K562 (cell line): ENCODE measurements at regions of chr1 and their contacts with region 1.

Region 1: GRCh38 chr1:28581536-28582247 is 10.4 kb upstream of the RAB42 start:
- DNase-seq: peak; percentile 93 to 99 (median 96)
- ATAC-seq: peak; percentile 92
- H3K4me3 ChIP-seq: peak overlapping the region; percentile 81
- H3K27ac ChIP-seq: peak overlapping the region; percentile 81
- H3K4me1 ChIP-seq: peaks cover 18 to 24% of the 10 kb centered on the region in 2 experiments; a peak in 4 of 5 replicates
- H3K27me3 ChIP-seq: no peaks in the 10 kb centered on the region
- CTCF ChIP-seq: peak in 2 of 3 experiments; percentile 1 to 25; a peak in 2 of 6 replicates
- EP300 ChIP-seq: peak; percentile 67
- POLR2A ChIP-seq: peak; percentile 100
- RAD21 ChIP-seq: peak in 1 of 2 experiments; percentile 21; a peak in 2 of 4 replicates

Region 2: DNA sequence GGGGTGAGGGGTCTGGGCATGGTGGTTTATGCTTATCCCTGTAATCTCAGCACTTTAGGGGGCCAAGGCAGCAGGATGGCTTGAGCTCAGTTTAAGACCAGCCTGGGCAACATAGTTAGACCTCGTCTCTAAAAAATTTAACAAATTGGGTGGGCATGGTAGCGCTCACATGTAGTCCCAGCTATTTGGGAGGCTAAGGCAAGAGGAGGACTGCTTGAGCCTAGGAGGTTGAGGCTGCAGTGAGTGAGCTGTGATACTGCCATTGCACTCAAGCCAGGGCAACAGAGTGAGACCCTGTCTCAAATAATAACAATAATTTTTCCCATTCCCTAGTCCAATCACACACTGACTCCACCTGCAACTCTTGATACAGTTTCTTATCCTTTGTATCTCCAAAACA is 1098.0 kb before region 1 on chr1:
- CTCF ChIA-PET with region 1: no interaction called
- POLR2A ChIA-PET with region 1: no interaction called
- in situ Hi-C with region 1: no loop called
- intact Hi-C with region 1: no loop called
- DNase-seq: no peak
- ATAC-seq: no peak
- H3K4me3 ChIP-seq: no peak overlapping the region
- H3K27ac ChIP-seq: no peak overlapping the region
- H3K4me1 ChIP-seq: peaks cover 8 to 9% of the 10 kb centered on the region in 2 experiments; a peak in 3 of 5 replicates
- H3K27me3 ChIP-seq: no peaks in the 10 kb centered on the region
- CTCF ChIP-seq: no peak
- EP300 ChIP-seq: no peak
- POLR2A ChIP-seq: no peak
- RAD21 ChIP-seq: no peak

Region 3: DNA sequence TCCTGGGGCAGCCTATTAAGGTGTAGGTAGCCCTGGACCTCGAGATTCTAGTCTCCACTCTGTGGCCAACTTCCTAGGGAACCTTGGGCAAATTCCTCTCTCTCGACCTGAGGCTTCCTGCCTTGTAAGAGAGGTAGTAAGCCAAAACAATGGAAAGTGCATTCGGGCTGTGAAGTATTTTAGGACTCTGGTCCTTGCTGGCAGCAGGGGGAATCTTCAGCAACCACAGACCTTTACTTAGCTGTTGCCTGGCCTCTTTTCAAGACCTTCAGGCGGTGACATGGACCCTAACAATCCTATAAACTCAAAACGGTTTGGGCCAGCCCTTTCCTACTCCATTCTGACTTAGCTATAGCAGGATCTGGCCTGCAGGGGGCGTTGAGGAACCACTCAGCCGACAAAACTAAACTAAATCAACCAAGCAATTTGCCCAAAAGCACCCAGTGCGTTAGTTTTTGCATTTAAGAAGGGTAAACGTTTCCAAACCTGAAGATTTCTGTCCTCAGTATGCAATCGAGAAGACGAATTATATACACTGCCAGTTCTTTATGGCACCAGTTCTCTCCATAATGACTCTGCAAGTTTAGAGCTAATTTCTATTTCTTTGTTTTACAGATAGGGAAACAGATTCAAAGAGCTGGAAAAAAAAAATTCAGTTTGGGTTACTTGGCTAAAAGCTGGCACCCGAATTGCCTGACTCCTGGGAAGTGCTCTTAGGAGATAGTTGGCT is 333.2 kb before region 1 on chr1:
- CTCF ChIA-PET with region 1: no interaction called
- POLR2A ChIA-PET with region 1: interaction called, 17 read pairs
- in situ Hi-C with region 1: no loop called
- intact Hi-C with region 1: no loop called
- DNase-seq: peak; percentile 67 to 92 (median 74)
- ATAC-seq: peak; percentile 71
- H3K4me3 ChIP-seq: peak overlapping the region; percentile 0; the same call in 1 of the 2 replicates
- H3K27ac ChIP-seq: peak overlapping the region; percentile 81
- H3K4me1 ChIP-seq: peaks cover 14 to 36% of the 10 kb centered on the region in 2 experiments
- H3K27me3 ChIP-seq: no peaks in the 10 kb centered on the region
- CTCF ChIP-seq: peak; percentile 88 to 99 (median 98)
- EP300 ChIP-seq: peak; percentile 60
- POLR2A ChIP-seq: no peak
- RAD21 ChIP-seq: peak; percentile 92

Region 4: GRCh38 chr1:28369371-28370238 is 212.1 kb before region 1 on chr1 and contains the start of gene PHACTR4:
- CTCF ChIA-PET with region 1: no interaction called
- POLR2A ChIA-PET with region 1: interaction called, 26 read pairs
- in situ Hi-C with region 1: no loop called
- intact Hi-C with region 1: no loop called
- DNase-seq: peak; percentile 95 to 99 (median 97)
- ATAC-seq: peak; percentile 97
- H3K4me3 ChIP-seq: peak within 1 kb of the TSS; percentile 55
- H3K27ac ChIP-seq: peak within 1 kb of the TSS; percentile 89
- H3K4me1 ChIP-seq: peaks cover 17 to 31% of the 10 kb centered on the region in 2 experiments; a peak in 4 of 5 replicates
- H3K27me3 ChIP-seq: no peaks in the 10 kb centered on the region
- CTCF ChIP-seq: peak in 1 of 3 experiments; percentile 13; a peak in 2 of 6 replicates
- EP300 ChIP-seq: peak; percentile 34
- POLR2A ChIP-seq: peak; percentile 99
- RAD21 ChIP-seq: peak in 1 of 2 experiments; percentile 10; a peak in 2 of 4 replicates
- polyA plus RNA-seq, gene PHACTR4: 12.8 to 14.2 TPM

Region 5: GRCh38 chr1:28518000-28518744 is 63.5 kb before region 1 on chr1:
- CTCF ChIA-PET with region 1: interaction called, 3 read pairs
- POLR2A ChIA-PET with region 1: interaction called, 201 read pairs
- in situ Hi-C with region 1: no loop called
- intact Hi-C with region 1: loop called (anchors 2 kb)
- DNase-seq: peak; percentile 93 to 96 (median 94)
- ATAC-seq: peak; percentile 76
- H3K4me3 ChIP-seq: peak overlapping the region; percentile 74
- H3K27ac ChIP-seq: peak overlapping the region; percentile 99
- H3K4me1 ChIP-seq: peaks cover 46 to 47% of the 10 kb centered on the region in 2 experiments
- H3K27me3 ChIP-seq: no peaks in the 10 kb centered on the region
- CTCF ChIP-seq: peak; percentile 96 to 99 (median 96)
- EP300 ChIP-seq: no peak
- POLR2A ChIP-seq: peak; percentile 87
- RAD21 ChIP-seq: peak; percentile 91 to 94

Region 6: GRCh38 chr1:28560886-28561285 is 20.8 kb before region 1 on chr1:
- CTCF ChIA-PET with region 1: no interaction called
- POLR2A ChIA-PET with region 1: interaction called, 157 read pairs
- in situ Hi-C with region 1: no loop called
- intact Hi-C with region 1: no loop called
- DNase-seq: no peak
- ATAC-seq: no peak
- H3K4me3 ChIP-seq: no peak overlapping the region
- H3K27ac ChIP-seq: no peak overlapping the region
- H3K4me1 ChIP-seq: no peaks in the 10 kb centered on the region
- H3K27me3 ChIP-seq: no peaks in the 10 kb centered on the region
- CTCF ChIP-seq: no peak
- EP300 ChIP-seq: no peak
- POLR2A ChIP-seq: no peak
- RAD21 ChIP-seq: no peak

Region 7: GRCh38 chr1:28642847-28643635 is 61.3 kb after region 1 on chr1 and contains the start of gene TAF12:
- CTCF ChIA-PET with region 1: no interaction called
- POLR2A ChIA-PET with region 1: interaction called, 66 read pairs
- in situ Hi-C with region 1: no loop called
- intact Hi-C with region 1: loop called (anchors 1 kb)
- DNase-seq: peak; percentile 90 to 98 (median 94)
- ATAC-seq: peak; percentile 89
- H3K4me3 ChIP-seq: peak within 1 kb of the TSS; percentile 79
- H3K27ac ChIP-seq: peak within 1 kb of the TSS; percentile 95
- H3K4me1 ChIP-seq: peaks cover 36 to 39% of the 10 kb centered on the region in 2 experiments; a peak in 4 of 5 replicates
- H3K27me3 ChIP-seq: no peaks in the 10 kb centered on the region
- CTCF ChIP-seq: peak; percentile 75 to 92 (median 92)
- EP300 ChIP-seq: peak; percentile 27
- POLR2A ChIP-seq: peak; percentile 99
- RAD21 ChIP-seq: peak; percentile 81 to 83
- polyA plus RNA-seq, gene TAF12: 77.8 to 89.0 TPM

Region 8: GRCh38 chr1:28886731-28887418 is 305.2 kb after region 1 on chr1:
- CTCF ChIA-PET with region 1: no interaction called
- POLR2A ChIA-PET with region 1: interaction called, 19 read pairs
- in situ Hi-C with region 1: no loop called
- intact Hi-C with region 1: no loop called
- DNase-seq: peak; percentile 96 to 100 (median 99)
- ATAC-seq: peak; percentile 74
- H3K4me3 ChIP-seq: peak overlapping the region; percentile 81
- H3K27ac ChIP-seq: peak overlapping the region; percentile 87
- H3K4me1 ChIP-seq: peaks cover 63 to 87% of the 10 kb centered on the region in 2 experiments
- H3K27me3 ChIP-seq: no peaks in the 10 kb centered on the region
- CTCF ChIP-seq: no peak
- EP300 ChIP-seq: no peak
- POLR2A ChIP-seq: peak; percentile 82
- RAD21 ChIP-seq: no peak